Gastrocnemius medialis (tissue), 4 donors: ENCODE measurements at regions of chr7 and their contacts with region 1.

Region 1: DNA sequence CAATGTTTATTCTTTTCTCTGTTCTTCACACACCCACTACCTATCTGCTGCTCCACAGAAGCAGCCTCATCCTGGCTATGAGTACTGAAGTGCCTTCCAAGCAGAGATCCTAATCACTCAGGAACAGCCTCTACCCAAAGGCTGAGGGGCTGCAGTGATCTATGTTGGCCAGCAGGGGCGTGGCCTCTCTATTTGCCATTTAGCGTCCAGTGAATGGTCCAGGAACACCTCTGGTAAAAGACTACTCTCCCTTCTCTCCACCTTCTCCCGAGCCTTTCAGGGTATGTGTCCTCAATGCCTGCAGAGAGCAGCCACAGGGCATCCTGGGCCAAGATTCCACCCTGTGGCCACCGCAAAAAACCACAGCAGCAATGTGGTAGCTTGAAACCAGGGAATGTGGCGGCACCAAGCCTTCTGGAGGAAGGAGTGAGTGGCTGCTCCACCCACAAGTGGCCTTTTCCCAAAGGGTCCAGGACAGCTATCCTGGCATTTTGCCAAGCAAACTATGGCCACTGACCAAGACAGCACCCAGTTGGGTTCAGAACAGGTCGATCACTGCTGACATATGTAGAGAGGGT is 70.9 kb downstream of the SYPL1 start:
- DNase-seq: no peak
- ATAC-seq: peak in 1 of 2 donors; percentile 43
- H3K4me3 ChIP-seq: no peak overlapping the region
- H3K27ac ChIP-seq: no peak overlapping the region
- H3K4me1 ChIP-seq: peaks cover 4 to 7% of the 10 kb centered on the region in 2 donors
- H3K27me3 ChIP-seq: no peaks in the 10 kb centered on the region
- CTCF ChIP-seq: peak; percentile 44 to 70 (median 53)
- POLR2A ChIP-seq: no peak

Region 2: DNA sequence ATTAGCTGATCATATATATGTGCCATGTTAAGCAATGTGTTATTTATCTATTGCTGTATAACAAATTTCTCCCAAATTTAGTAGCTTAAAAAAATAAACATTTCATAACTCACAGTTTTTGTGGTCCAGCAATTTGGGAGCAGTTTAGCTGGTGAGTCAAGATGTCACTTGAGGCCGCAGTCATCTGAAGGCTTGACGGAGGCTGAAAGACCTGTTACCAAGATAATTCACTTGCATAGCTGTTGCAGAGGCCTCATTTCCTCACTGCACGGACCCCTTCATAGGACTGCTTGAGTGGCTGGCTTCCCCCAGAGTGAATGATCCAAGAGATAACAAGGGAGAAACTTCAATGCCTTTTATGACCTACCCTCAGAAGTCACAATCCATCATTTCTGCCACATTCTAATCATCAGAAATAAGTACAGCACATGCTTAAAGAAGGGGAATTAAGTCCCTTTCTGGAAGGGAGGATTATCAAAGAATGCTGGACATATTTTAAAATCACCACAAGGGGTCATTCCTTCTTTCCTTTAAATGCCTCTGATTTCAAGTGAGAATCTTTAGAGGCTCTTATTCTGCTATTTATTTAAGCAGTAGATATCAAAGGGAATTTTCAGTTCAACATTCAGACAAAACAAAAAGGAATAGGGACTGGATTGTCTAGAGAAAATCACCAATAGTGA is 642.0 kb before region 1 on chr7:
- in situ Hi-C with region 1: no loop called
- intact Hi-C with region 1: no loop called
- DNase-seq: no peak
- ATAC-seq: no peak
- H3K4me3 ChIP-seq: no peak overlapping the region
- H3K27ac ChIP-seq: no peak overlapping the region
- H3K4me1 ChIP-seq: peaks cover 4 to 7% of the 10 kb centered on the region in 2 donors
- H3K27me3 ChIP-seq: no peaks in the 10 kb centered on the region
- CTCF ChIP-seq: no peak
- POLR2A ChIP-seq: no peak

Region 3: GRCh38 chr7:106009403-106010226 is 31.6 kb before region 1 on chr7:
- in situ Hi-C with region 1: no loop called
- intact Hi-C with region 1: loop called (anchors 2 kb)
- DNase-seq: peak; percentile 43 to 67
- ATAC-seq: peak; percentile 82 to 93
- H3K4me3 ChIP-seq: peak overlapping the region in 1 of 4 donors; percentile 8
- H3K27ac ChIP-seq: no peak overlapping the region
- H3K4me1 ChIP-seq: peaks cover 0 to 7% of the 10 kb centered on the region in 2 donors
- H3K27me3 ChIP-seq: no peaks in the 10 kb centered on the region
- CTCF ChIP-seq: peak; percentile 94 to 98 (median 96)
- POLR2A ChIP-seq: no peak